ENCODE measurements at regions of chr2 and their contacts with region 1.

Region 1: GRCh38 chr2:140295767-140296166 is 1515.6 kb upstream of the NXPH2 start:
- DNase-seq: no peak
- H3K4me3 ChIP-seq: no peak overlapping the region
- H3K27ac ChIP-seq: no peak overlapping the region
- H3K4me1 ChIP-seq: peaks cover 6% of the 10 kb centered on the region
- CTCF ChIP-seq: no peak

Region 2: DNA sequence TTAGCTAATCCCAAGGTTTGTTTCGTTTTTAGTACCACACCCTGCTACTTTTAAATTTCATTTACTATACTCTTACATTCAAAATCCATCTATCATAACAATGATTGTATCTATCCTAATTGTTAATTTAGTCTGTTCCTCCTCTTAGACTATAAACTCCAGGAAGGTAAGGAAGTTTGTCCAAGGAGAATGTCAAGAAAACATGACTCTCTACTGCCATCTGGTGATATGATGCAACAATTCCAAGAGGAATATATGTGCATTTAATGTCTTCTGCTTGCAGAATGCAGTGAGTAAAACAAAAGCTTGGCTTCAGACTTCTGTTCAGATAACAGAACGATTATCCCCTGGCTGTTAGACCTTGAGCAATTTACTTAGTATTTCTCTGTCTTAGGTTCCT is 567.9 kb after region 1 on chr2:
- CTCF ChIA-PET with region 1: no interaction called
- POLR2A ChIA-PET with region 1: no interaction called
- intact Hi-C with region 1: loop called (anchors 5 kb)
- DNase-seq: peak; percentile 30
- H3K4me3 ChIP-seq: no peak overlapping the region
- H3K27ac ChIP-seq: no peak overlapping the region
- H3K4me1 ChIP-seq: no peaks in the 10 kb centered on the region
- CTCF ChIP-seq: peak; percentile 72

Measured in OCI-LY7 (cell line).